Activated naive CD4-positive, alpha-beta T cell treated with anti-CD3 and anti-CD28 coated beads for 36 hours (primary cell): ENCODE measurements at regions of chr12 and their contacts with region 1.

Region 1: GRCh38 chr12:104695453-104696148 is 238.9 kb downstream of the CHST11 start:
- DNase-seq: peak; percentile 97
- H3K4me3 Mint-ChIP-seq: peak overlapping the region; percentile 37
- H3K27ac Mint-ChIP-seq: peak overlapping the region; percentile 93
- H3K4me1 Mint-ChIP-seq: peaks cover 61% of the 10 kb centered on the region
- H3K27me3 Mint-ChIP-seq: no peaks in the 10 kb centered on the region

Region 2: GRCh38 chr12:104250366-104251125 is 445.1 kb before region 1 on chr12:
- CTCF ChIA-PET with region 1: no interaction called
- intact Hi-C with region 1: no loop called
- DNase-seq: no peak
- H3K4me3 Mint-ChIP-seq: no peak overlapping the region
- H3K27ac Mint-ChIP-seq: no peak overlapping the region
- H3K4me1 Mint-ChIP-seq: no peaks in the 10 kb centered on the region
- H3K27me3 Mint-ChIP-seq: no peaks in the 10 kb centered on the region

Region 3: DNA sequence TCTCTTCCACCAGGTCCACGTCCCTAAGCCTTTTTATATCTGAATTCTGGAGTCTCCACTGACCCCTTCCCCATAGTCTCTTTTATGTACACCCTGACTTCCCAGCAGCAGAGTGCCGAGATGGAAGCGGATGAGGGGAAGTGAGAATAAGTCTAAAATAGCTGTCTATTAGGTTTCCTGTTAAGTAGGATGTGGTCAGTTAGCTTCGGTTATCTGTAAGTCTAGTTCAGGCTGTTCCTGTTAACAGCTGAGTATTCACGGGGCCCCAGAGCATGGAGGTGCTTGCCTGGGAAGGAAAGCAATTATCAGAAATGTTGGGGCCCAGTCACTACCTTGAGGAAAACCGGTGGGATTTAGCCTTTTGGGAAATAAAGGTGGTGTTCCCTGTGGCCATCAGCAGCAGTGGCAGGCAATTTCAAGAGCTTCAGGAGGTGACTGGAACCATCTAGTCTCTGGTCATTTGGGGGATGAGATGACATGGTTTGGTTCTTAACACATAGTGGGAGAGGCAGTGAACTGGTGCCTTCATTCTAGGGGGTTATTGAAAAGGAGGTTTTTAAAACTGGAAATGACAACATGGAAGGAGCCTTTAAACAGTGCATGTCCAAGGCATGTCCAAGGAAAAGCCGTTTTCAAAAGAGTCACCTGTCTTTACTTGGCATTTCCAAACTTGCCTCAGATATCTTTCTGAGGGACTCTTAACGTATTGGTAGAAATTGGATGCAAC is 217.0 kb before region 1 on chr12:
- CTCF ChIA-PET with region 1: no interaction called
- intact Hi-C with region 1: loop called (anchors 2 kb)
- DNase-seq: peak; percentile 63
- H3K4me3 Mint-ChIP-seq: peak overlapping the region; percentile 83
- H3K27ac Mint-ChIP-seq: peak overlapping the region; percentile 96
- H3K4me1 Mint-ChIP-seq: peaks cover 68% of the 10 kb centered on the region
- H3K27me3 Mint-ChIP-seq: no peaks in the 10 kb centered on the region

Region 4: DNA sequence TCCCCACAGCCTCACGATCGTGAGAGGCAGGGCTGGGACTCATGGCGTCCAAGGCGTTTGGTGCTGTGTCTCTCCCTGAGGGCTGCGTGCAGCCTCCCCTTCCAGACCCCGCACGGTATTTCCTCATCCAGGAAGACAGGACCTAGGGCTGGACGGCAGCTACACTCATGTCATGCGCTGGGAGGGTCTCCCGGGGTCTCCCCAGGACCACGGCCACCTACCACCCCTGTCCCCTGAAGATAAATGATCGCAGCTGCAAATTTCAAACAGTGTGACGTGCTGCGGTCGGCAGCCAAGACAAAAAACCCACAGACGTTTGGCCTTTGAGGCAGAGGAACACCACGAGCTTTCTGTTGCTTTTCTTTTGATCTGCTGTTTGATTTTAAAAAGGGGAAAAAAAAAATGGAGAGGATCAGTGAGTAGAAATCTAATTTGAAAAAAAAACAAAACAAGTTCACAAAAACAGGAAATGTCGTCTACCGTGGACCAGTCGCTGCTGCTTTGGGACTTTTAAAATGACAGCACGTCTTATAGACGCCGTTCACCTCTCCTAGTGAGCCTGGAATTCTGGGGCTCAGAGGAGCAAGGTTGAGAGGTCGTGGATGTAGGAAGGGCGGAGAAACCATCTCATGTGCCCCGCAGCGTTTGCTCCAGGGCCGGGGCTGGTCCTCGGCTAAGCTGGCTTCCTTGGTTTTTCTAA is 24.9 kb after region 1 on chr12:
- CTCF ChIA-PET with region 1: no interaction called
- intact Hi-C with region 1: loop called (anchors 1 kb)
- DNase-seq: peak; percentile 81
- H3K4me3 Mint-ChIP-seq: peak overlapping the region; percentile 70
- H3K27ac Mint-ChIP-seq: peak overlapping the region; percentile 79
- H3K4me1 Mint-ChIP-seq: peaks cover 35% of the 10 kb centered on the region
- H3K27me3 Mint-ChIP-seq: no peaks in the 10 kb centered on the region

Region 5: DNA sequence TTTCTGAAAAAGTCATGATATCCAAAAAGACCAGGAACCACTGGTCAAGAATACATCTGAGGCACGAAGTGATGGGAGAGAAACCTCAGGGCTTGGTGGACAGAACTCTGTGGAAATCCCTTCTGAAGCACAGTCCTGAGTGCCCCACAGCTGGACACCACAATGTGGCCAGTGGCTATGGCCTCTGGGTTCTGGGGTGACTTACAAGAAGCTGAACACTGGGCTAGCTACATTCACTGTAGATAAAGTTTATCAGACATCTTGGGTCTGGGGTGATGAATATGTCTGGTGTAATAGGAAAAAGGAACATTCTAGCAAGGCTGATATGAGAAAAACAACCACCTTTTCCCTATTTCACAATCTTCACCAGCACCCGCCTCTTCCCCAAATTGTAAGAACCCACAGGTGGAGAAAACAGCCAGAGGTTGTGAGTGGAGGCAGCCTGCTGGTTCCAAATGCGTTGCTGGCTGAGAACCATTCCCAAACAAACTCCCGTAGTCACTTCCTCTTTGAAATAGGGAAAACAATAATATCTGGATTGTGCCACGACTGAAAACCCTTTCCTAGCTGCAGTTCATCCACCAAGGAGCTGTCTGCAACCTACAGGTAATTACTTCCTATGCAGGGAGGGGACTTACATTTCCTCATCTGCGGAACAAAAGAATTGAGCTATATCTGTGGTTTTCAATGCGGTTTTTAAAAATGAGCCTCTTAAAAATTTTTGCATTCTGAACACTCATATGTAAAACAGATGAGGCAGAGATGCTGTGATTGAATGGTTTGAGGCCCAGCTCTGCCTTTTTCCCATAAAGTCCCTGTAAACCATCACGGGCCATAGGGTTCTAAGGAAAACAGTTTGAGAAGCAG is 68.9 kb after region 1 on chr12:
- CTCF ChIA-PET with region 1: no interaction called
- intact Hi-C with region 1: loop called (anchors 1 kb)
- DNase-seq: peak; percentile 44
- H3K4me3 Mint-ChIP-seq: no peak overlapping the region
- H3K27ac Mint-ChIP-seq: no peak overlapping the region
- H3K4me1 Mint-ChIP-seq: peaks cover 23% of the 10 kb centered on the region
- H3K27me3 Mint-ChIP-seq: no peaks in the 10 kb centered on the region

Region 6: DNA sequence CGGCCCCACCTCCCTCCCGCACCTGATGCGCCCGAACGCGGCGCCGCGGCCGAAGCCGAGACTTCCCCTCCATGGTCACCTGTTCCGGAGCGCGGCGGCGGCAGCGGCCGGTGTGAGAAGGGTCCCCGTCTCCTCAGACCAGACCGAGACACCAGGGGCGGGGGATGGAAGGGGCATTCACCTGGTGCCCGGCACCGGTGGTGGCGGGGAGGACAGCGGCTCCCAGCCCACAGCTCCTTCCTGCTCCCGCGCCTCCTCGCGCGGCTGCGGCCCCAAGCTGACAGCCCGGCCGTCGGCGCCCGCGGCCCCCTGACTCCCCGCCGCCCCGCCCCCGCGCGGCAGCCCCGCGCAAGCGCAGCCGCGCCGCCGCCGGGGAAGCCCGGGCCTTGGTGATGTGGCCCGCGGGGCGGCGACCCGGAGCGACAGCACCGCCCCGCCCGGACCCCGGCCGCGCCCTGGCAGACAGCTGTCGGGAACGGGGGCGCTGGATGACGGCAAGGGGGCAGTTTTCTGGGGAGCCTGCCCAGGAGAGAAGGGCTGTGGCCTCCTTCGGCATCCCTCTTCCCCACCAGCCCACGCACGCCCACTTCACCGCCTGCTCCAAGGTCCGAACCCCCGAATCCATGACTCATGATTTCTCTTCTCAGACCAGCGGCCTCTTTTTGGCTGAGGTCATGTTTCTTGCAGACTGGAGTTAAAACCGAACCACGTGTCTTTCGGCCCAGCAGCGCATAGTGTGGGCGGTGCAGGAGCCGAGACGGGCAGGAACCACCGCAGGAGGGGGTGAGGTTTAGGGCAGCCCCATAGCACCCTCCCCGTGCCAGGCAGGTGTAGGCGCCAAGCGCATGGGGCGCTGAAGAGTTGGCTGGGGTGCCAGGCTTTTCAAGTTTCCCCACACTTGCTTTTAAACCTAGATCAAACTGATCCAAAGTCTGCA is 262.7 kb after region 1 on chr12 and contains the start of gene SLC41A2:
- CTCF ChIA-PET with region 1: no interaction called
- intact Hi-C with region 1: loop called (anchors 1 kb)
- DNase-seq: peak; percentile 85
- H3K4me3 Mint-ChIP-seq: peak within 1 kb of the TSS; percentile 84
- H3K27ac Mint-ChIP-seq: peak within 1 kb of the TSS; percentile 72
- H3K4me1 Mint-ChIP-seq: peaks cover 19% of the 10 kb centered on the region
- H3K27me3 Mint-ChIP-seq: peaks cover 14% of the 10 kb centered on the region
- total RNA-seq, gene SLC41A2: 2.7 to 3.5 TPM